Calu3 (cell line): ENCODE measurements at regions of chr10 and their contacts with region 1.

Region 1: DNA sequence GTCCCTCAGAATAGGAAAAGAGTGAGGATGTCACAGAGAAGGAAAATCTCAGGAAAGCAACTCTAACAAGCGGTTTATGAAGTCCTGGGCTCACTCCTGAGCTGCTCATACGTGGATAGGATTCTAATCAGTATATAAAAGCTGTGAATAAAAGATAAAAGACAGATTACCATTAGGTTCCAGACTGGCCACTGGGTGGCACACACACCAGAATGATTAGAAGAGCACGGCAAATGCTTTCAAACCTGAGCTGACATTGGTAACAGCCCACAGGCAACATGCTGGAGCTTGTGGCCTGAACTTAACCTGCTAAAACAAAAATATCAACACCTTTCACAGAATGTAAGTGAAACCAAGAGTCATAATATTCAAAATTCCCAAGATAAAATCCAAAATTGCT is 370.8 kb downstream of the GRID1 start:
- DNase-seq: peak; percentile 12
- H3K4me3 Mint-ChIP-seq: no peak overlapping the region
- H3K27ac Mint-ChIP-seq: no peak overlapping the region
- H3K4me1 Mint-ChIP-seq: no peaks in the 10 kb centered on the region
- H3K27me3 Mint-ChIP-seq: no peaks in the 10 kb centered on the region
- CTCF ChIP-seq: no peak

Region 2: GRCh38 chr10:85222300-85222699 is 773.5 kb before region 1 on chr10:
- CTCF ChIA-PET with region 1: no interaction called
- intact Hi-C with region 1: no loop called
- DNase-seq: no peak
- H3K4me3 Mint-ChIP-seq: no peak overlapping the region
- H3K27ac Mint-ChIP-seq: no peak overlapping the region
- H3K4me1 Mint-ChIP-seq: no peaks in the 10 kb centered on the region
- H3K27me3 Mint-ChIP-seq: no peaks in the 10 kb centered on the region
- CTCF ChIP-seq: no peak

Region 3: DNA sequence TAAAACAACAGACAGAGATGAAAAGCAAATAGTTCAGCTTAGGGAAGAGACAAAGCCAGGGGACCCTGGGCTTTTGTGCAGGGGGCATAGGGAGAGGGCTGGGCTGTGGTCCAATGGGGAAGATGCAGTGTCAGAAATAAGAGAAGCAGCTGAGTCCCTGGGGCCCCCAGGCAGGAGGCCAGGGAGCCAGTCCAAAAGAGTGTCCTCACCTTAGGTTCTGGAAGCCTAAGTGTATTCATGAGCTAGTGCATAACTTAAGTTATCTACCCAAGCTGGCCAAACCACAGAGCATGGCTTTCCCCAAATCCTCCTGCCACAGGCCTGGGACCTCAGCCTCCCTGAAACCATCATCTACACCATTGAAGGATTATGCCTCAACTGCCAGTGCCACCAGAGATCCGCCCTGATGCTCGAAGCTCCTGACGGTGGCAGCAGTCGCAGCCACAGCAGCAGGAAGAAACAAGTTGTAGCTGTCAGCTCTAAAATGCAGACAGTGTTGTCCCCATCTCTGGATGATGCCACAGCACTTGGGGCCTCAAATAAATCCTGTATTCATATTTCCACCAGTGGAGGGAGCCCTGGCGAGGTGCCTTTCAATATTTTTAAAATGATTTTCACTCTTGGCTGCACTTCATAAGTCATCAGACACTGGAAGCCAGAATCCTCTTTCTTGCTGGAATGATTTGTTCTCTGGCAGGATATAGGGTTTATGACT is 203.8 kb before region 1 on chr10:
- CTCF ChIA-PET with region 1: no interaction called
- intact Hi-C with region 1: loop called (anchors 10 kb)
- DNase-seq: peak; percentile 6
- H3K4me3 Mint-ChIP-seq: no peak overlapping the region
- H3K27ac Mint-ChIP-seq: no peak overlapping the region
- H3K4me1 Mint-ChIP-seq: peaks cover 9% of the 10 kb centered on the region
- H3K27me3 Mint-ChIP-seq: no peaks in the 10 kb centered on the region
- CTCF ChIP-seq: no peak

Region 4: GRCh38 chr10:86163522-86164173 is 167.9 kb after region 1 on chr10:
- CTCF ChIA-PET with region 1: no interaction called
- intact Hi-C with region 1: no loop called
- DNase-seq: no peak
- H3K4me3 Mint-ChIP-seq: no peak overlapping the region
- H3K27ac Mint-ChIP-seq: no peak overlapping the region
- H3K4me1 Mint-ChIP-seq: peaks cover 16% of the 10 kb centered on the region
- H3K27me3 Mint-ChIP-seq: peaks cover 41% of the 10 kb centered on the region
- CTCF ChIP-seq: no peak

Region 5: DNA sequence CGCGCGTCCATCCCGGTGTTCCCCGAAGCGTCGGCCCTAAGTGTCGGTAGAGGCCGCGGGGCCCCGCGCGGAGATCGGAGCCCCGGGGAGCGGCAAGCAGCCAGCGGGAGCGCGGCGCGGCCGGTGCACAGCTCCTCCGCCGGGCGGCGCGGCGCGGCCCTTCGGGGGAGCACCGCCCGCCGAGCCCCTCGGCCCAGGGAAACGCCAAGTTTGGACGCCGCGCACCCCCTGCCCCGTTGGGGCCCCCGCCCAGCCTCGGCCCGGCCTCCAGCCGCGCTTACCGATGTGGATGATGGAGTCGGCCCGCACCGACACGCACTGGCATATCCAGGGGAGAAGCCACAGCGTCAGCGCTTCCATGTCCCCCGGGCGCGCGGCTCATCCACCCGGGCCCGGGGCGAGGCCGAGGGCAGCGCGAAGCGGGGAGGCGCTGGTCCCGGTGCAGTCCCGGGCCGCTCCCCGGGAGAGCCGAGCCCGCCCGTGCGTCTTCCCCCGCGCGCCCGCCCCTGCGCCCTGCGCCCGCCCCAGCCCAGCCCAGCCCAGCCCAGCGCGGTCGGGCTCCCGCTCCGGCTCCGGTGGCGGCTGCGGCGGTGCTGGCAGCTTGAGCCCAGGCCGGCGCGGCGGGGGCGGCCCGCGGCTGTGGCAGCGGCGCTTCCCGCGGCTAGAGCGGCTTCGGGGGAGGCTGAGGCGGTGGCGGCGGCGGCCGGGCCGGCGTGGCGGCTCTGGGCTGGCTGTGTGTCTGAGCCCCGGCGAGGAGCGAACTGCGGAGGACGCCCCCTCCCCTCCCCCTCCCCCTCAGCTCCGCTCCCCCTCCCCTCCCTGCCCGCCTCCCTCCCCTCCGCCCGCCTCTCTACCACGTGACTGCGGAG is 370.5 kb after region 1 on chr10 and contains the start of gene GRID1:
- CTCF ChIA-PET with region 1: no interaction called
- intact Hi-C with region 1: loop called (anchors 5 kb)
- DNase-seq: peak; percentile 18
- H3K4me3 Mint-ChIP-seq: peak within 1 kb of the TSS; percentile 62
- H3K27ac Mint-ChIP-seq: no peak within 1 kb of the TSS
- H3K4me1 Mint-ChIP-seq: peaks cover 8% of the 10 kb centered on the region
- H3K27me3 Mint-ChIP-seq: peaks cover 90% of the 10 kb centered on the region
- CTCF ChIP-seq: no peak
- total RNA-seq, gene GRID1: 0.10 TPM in 1 of 2 replicates, not detected in the other